Left cardiac atrium (tissue), 4 donors: ENCODE measurements at regions of chr9 and their contacts with region 1.

Region 1: DNA sequence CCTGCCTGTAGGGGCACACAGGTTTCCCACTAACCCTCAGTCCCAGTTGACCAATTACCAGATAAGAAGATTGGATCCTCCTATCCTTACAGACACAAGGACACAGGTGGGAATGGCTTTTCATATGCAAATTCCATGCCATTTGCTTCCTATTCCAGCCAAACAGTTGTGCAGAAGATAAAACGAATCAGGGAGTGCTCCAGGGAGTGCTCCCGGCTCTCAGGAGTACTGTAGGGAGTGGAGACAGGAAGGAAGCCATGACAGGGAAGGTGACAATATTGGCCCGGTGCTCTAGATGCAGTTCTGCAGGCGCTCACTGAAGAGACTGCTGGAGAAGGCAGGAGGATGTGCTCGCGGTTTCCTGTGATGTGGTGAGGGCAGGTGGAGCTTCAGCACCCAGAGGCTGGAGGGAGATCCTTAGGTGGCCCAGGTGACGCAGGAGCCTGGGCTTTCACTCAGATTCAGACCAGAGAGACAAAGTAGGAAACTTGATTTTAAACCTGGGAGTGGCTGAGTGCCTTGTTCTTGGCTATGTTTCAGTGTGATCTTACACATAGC is 260.0 kb downstream of the AUH start:
- DNase-seq: no peak
- ATAC-seq: peak in 1 of 2 donors; percentile 19

Region 2: GRCh38 chr9:91193658-91194391 is 92.1 kb after region 1 on chr9:
- intact Hi-C with region 1: loop called in 1 of 2 experiments (anchors 5 kb)
- DNase-seq: peak; percentile 92
- ATAC-seq: peak; percentile 75 to 80